ENCODE measurements at regions of chr22 and their contacts with region 1.

Region 1: DNA sequence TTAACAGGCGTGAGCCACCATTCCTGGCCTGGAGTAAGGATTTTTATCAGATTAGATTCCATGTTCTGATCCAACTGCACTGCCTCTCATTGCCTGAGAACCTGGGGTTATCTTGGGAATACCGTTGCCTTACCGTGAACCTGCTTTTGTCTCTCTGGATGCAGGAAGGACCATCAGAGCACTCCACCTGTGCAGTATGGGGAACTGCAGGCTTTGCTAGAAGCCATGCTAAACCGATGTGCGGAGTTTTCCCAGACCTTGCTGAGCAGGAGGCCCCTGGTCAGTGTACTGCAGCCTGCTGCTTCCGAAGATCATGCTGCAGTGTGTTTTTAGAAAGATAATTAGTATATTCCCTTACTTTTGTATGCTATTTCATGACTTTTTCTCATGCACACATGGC is 43.6 kb downstream of the MEI1 start:
- DNase-seq: no peak
- H3K4me3 ChIP-seq: no peak overlapping the region
- CTCF ChIP-seq: peak; percentile 16

Region 2: GRCh38 chr22:41613456-41613855 is 129.5 kb before region 1 on chr22:
- in situ Hi-C with region 1: no loop called
- DNase-seq: no peak
- H3K4me3 ChIP-seq: no peak overlapping the region
- CTCF ChIP-seq: no peak

Region 3: GRCh38 chr22:41697126-41697775 is 45.7 kb before region 1 on chr22:
- in situ Hi-C with region 1: loop called (anchors 5 kb)
- DNase-seq: peak; percentile 78
- H3K4me3 ChIP-seq: no peak overlapping the region
- CTCF ChIP-seq: peak; percentile 98

Region 4: GRCh38 chr22:41777749-41778425 is 35.0 kb after region 1 on chr22:
- in situ Hi-C with region 1: loop called (anchors 5 kb)
- DNase-seq: no peak
- H3K4me3 ChIP-seq: no peak overlapping the region
- CTCF ChIP-seq: no peak

Region 5: GRCh38 chr22:41841085-41841659 is 98.3 kb after region 1 on chr22:
- in situ Hi-C with region 1: no loop called
- DNase-seq: no peak
- H3K4me3 ChIP-seq: no peak overlapping the region
- CTCF ChIP-seq: no peak

Region 6: DNA sequence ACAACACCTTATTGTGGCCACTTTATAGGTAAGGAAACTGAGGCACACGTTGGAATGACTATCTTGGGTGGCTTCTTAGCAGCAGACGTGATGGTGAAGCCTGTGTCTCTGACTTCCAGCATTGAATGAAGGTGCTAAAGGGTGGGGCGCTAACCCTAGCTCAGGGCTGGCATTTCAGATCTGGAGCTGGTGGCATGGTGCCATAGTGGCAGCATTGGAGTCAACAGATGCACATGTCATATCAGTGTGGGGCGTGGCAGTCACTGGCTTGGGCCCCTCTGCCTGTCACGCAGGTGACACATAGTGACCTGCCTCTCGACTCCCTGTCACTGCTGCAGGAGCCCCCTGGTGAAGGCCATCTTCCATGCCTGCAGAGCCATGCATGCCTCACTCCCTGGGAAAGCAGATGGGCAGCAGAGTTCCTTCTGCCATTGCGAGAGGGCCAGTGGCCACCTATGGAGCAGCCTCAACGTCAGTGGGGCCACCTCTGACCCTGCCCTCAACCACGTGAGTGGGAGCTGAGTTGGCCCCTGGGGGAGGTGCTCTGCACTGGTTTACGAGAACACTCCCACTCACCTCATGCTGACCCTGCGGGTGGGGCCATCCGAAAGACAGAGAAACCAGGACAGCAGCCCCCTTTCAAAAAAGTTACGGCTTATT is 157.2 kb after region 1 on chr22:
- in situ Hi-C with region 1: loop called (anchors 5 kb)
- DNase-seq: no peak
- H3K4me3 ChIP-seq: no peak overlapping the region
- CTCF ChIP-seq: no peak

Measured in astrocyte of the cerebellum (primary cell).